ENCODE measurements at regions of chr13 and their contacts with region 1.

Region 1: DNA sequence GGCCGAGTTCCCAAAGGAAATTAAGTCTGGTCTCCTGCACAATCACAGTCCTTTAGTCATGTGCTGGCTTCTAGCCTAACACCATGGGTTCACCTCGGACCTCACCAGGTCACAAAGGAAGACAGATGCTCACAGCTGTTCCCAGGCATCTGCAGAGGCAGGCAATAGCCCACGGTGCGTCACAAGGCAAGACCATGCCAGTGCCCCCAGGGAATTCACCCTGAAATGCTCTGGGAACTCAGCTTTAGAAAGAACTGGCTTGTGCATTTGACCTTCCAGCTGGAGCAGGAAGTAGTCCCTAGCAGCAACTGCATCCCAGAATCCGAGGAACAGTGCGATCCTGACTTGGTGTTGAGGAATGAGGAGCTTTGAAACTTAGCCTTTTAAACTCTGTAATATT is 96.8 kb upstream of the WASF3 start:
- DNase-seq: no peak
- H3K4me3 ChIP-seq: no peak overlapping the region
- H3K27ac ChIP-seq: no peak overlapping the region
- H3K4me1 ChIP-seq: no peaks in the 10 kb centered on the region
- H3K27me3 ChIP-seq: peaks cover 0 to 5% of the 10 kb centered on the region in 2 donors
- CTCF ChIP-seq: no peak
- POLR2A ChIP-seq: no peak

Region 2: DNA sequence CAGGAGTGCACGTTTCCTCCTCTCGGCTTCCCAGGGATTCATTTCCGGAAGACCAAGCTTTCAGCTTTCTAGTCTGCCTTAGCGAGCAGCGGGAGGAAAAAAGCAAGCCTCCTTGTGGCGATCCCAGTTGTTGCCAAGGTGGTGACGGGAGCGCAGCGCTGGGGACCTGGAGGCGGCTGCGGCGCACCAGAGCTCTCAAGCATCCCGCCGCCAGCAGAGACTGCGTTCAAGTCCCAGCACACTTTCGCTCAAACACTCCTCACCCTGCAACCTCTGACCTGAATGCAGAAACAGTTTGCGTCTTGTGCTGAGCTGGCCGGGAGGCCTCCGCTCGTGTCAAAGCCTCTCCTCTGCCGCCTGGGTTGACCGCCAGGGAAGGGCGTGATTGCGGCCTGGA is 1336.6 kb after region 1 on chr13:
- intact Hi-C with region 1: loop called (anchors 5 kb)
- DNase-seq: no peak
- H3K4me3 ChIP-seq: no peak overlapping the region
- H3K27ac ChIP-seq: no peak overlapping the region
- H3K4me1 ChIP-seq: peaks cover 0 to 8% of the 10 kb centered on the region in 2 donors
- H3K27me3 ChIP-seq: peaks cover 16 to 97% of the 10 kb centered on the region in 2 donors
- CTCF ChIP-seq: no peak
- POLR2A ChIP-seq: no peak

Measured in breast epithelium (tissue), 4 donors.